SK-N-SH (cell line): ENCODE measurements at regions of chr6 and their contacts with region 1.

Region 1: DNA sequence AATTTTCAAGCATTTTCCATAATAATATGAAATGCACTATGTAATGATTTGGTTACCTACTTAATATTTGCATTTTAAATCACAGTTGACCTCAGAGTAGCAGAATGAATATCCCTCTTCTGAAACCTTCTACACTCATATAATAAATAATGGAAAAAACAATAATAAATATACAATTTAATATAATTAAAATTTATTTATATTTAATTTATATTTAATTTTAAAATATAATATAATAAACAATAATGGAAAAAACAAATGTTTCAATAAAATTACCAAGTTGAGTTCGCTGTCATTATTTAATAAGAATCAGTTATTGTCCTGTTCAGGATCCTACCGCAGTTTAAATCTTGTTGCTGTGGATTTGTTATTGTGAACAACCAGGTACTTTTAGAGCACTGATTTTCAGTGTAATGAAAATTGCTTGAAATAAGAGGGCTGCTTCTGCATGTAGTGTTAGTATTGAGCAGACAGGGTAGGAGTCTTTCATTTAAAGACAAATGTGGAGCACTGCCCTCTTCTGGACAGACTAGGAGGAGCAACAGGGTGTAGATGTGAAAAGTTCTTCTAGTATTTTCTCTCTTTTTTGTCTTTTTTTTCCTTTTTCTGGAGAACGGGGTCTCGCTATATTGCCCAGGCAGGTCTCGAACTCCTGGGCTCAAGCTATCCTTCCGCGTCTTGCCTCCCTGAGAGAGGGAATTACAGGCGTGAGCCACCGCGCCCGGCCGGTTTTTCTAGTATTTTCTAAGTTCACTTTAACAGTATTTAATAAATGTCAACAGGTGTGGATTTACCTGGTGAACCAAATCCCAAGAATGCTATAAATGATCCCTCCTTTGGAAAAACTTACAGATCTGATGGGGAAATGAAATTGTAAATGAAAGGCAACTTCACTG is 13.6 kb downstream of the TRAPPC3L start:
- DNase-seq: peak; percentile 56
- H3K4me3 ChIP-seq: no peak overlapping the region
- H3K27ac ChIP-seq: no peak overlapping the region
- H3K4me1 ChIP-seq: peaks cover 0 to 21% of the 10 kb centered on the region in 2 experiments; a peak in 2 of 4 replicates
- H3K27me3 ChIP-seq: no peaks in the 10 kb centered on the region
- CTCF ChIP-seq: peak; percentile 73
- EP300 ChIP-seq: no peak
- RAD21 ChIP-seq: peak; percentile 70

Region 2: GRCh38 chr6:116279260-116280063 is 252.5 kb before region 1 on chr6 and contains the start of gene TSPYL1:
- CTCF ChIA-PET with region 1: interaction called, 20 read pairs
- POLR2A ChIA-PET with region 1: no interaction called
- DNase-seq: peak; percentile 91
- H3K4me3 ChIP-seq: peak within 1 kb of the TSS; percentile 62 to 82
- H3K27ac ChIP-seq: peak within 1 kb of the TSS; percentile 94 to 98
- H3K4me1 ChIP-seq: peaks cover 4 to 20% of the 10 kb centered on the region in 2 experiments; a peak in 2 of 4 replicates
- H3K27me3 ChIP-seq: no peaks in the 10 kb centered on the region
- CTCF ChIP-seq: peak; percentile 28
- EP300 ChIP-seq: peak in 1 of 2 experiments; percentile 72; a peak in 2 of 4 replicates
- RAD21 ChIP-seq: no peak
- polyA plus RNA-seq, gene TSPYL1: 27.9 and 31.7 TPM in 2 replicates

Region 3: GRCh38 chr6:116542426-116542825 is 10.5 kb after region 1 on chr6:
- CTCF ChIA-PET with region 1: interaction called, 16 read pairs
- POLR2A ChIA-PET with region 1: no interaction called
- DNase-seq: no peak
- H3K4me3 ChIP-seq: no peak overlapping the region
- H3K27ac ChIP-seq: no peak overlapping the region
- H3K4me1 ChIP-seq: no peaks in the 10 kb centered on the region; a peak in 1 of 4 replicates
- H3K27me3 ChIP-seq: no peaks in the 10 kb centered on the region
- CTCF ChIP-seq: no peak
- EP300 ChIP-seq: no peak
- RAD21 ChIP-seq: no peak

Region 4: GRCh38 chr6:116550796-116551195 is 18.9 kb after region 1 on chr6:
- CTCF ChIA-PET with region 1: interaction called, 11 read pairs
- POLR2A ChIA-PET with region 1: no interaction called
- DNase-seq: no peak
- H3K4me3 ChIP-seq: no peak overlapping the region
- H3K27ac ChIP-seq: no peak overlapping the region
- H3K4me1 ChIP-seq: no peaks in the 10 kb centered on the region; a peak in 1 of 4 replicates
- H3K27me3 ChIP-seq: no peaks in the 10 kb centered on the region
- CTCF ChIP-seq: no peak
- EP300 ChIP-seq: no peak
- RAD21 ChIP-seq: no peak

Region 5: GRCh38 chr6:116561377-116562018 is 29.6 kb after region 1 on chr6:
- CTCF ChIA-PET with region 1: interaction called, 60 read pairs
- POLR2A ChIA-PET with region 1: no interaction called
- DNase-seq: peak; percentile 70
- H3K4me3 ChIP-seq: no peak overlapping the region; a peak in 1 of 4 replicates
- H3K27ac ChIP-seq: no peak overlapping the region
- H3K4me1 ChIP-seq: peaks cover 2 to 23% of the 10 kb centered on the region in 2 experiments; a peak in 3 of 4 replicates
- H3K27me3 ChIP-seq: no peaks in the 10 kb centered on the region
- CTCF ChIP-seq: peak; percentile 94
- EP300 ChIP-seq: no peak
- RAD21 ChIP-seq: peak; percentile 93

Region 6: GRCh38 chr6:116633685-116634084 is 101.8 kb after region 1 on chr6:
- CTCF ChIA-PET with region 1: no interaction called
- POLR2A ChIA-PET with region 1: no interaction called
- DNase-seq: peak; percentile 7
- H3K4me3 ChIP-seq: no peak overlapping the region
- H3K27ac ChIP-seq: no peak overlapping the region
- H3K4me1 ChIP-seq: no peaks in the 10 kb centered on the region
- H3K27me3 ChIP-seq: no peaks in the 10 kb centered on the region
- CTCF ChIP-seq: peak; percentile 32; the same call in 1 of the 2 replicates
- EP300 ChIP-seq: no peak
- RAD21 ChIP-seq: no peak

Region 7: DNA sequence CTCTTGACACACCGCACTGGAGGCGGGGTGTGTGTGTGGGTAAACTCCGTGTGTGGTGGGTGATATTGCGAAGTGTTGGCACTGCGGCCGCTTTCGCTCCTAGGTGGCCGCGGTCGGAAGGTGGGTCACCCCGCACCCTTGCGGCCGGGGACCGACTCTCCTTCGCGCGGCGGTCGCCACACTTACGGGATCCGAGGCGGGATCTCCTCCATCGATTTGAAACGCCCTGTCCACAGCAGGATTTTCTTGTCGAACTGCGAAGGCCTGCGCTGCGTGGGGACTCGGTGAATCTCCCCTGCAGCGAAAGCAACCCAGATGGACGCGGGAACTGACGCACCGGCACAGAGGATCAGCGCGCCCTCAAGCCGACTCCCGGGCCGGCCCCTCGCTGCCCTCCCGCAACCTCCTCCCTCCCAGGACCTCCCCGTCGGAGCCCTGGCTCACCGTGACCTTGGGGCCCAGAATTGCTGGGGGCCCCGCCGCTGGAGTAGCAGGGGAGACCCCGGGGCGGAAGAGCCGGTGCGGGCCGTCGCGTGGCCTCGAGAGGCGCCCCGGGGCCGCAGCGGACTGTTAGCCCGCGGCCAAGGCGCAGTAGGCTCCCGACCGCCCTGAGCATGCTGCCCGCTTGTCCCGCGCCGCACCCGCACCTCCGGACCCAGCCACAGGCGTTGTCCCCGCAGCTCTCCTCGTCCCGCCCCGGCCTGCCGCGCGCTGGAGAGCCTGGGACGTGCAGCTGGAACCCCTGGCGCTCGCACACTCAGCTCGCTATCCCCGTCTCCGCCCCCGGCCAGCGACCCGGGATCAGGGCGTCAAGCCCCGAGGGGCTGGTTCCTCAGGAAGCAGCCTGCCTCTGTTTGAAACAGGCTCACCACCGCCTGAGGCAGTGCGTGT is 233.3 kb after region 1 on chr6 and contains the start of gene FAM162B:
- CTCF ChIA-PET with region 1: no interaction called
- POLR2A ChIA-PET with region 1: no interaction called
- DNase-seq: peak; percentile 69
- H3K4me3 ChIP-seq: peak within 1 kb of the TSS in 1 of 2 experiments; percentile 19; a peak in 2 of 4 replicates
- H3K27ac ChIP-seq: peak within 1 kb of the TSS in 1 of 2 experiments; percentile 75; a peak in 1 of 4 replicates
- H3K4me1 ChIP-seq: peaks cover 0 to 11% of the 10 kb centered on the region in 2 experiments; a peak in 2 of 4 replicates
- H3K27me3 ChIP-seq: peaks cover 14% of the 10 kb centered on the region; the same call in 1 of the 2 replicates
- CTCF ChIP-seq: no peak
- EP300 ChIP-seq: no peak
- RAD21 ChIP-seq: no peak
- polyA plus RNA-seq, gene FAM162B: not detected in 2 replicates

Region 8: GRCh38 chr6:116975600-116975999 is 443.7 kb after region 1 on chr6:
- CTCF ChIA-PET with region 1: no interaction called
- POLR2A ChIA-PET with region 1: no interaction called
- DNase-seq: no peak
- H3K4me3 ChIP-seq: no peak overlapping the region
- H3K27ac ChIP-seq: no peak overlapping the region
- H3K4me1 ChIP-seq: no peaks in the 10 kb centered on the region
- H3K27me3 ChIP-seq: no peaks in the 10 kb centered on the region; the same call in 1 of the 2 replicates
- CTCF ChIP-seq: no peak
- EP300 ChIP-seq: no peak
- RAD21 ChIP-seq: no peak